ENCODE measurements at regions of chr7 and their contacts with region 1.

Region 1: GRCh38 chr7:66033471-66034385 is 41.9 kb upstream of the ASL start:
- DNase-seq: no peak
- H3K4me3 ChIP-seq: no peak overlapping the region
- H3K27ac ChIP-seq: no peak overlapping the region
- H3K27me3 ChIP-seq: no peaks in the 10 kb centered on the region
- CTCF ChIP-seq: no peak

Region 2: DNA sequence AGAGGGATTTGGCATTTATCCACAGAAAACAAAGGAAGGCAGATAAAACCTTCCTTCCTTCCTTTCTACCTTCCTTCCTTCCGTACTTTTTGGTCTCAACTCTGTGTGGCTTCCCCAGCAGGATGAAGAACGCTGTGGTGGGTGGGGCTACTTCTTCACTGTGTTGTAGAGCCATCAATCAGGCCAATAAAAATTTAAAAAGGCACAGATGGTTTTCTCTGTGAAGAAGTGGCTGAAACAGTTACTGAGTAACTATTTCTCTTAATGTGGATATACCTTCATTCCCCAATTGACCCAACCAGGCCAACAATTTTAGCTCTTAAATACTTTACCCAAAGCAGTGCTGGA is 584.2 kb before region 1 on chr7:
- CTCF ChIA-PET with region 1: no interaction called
- POLR2A ChIA-PET with region 1: no interaction called
- DNase-seq: no peak
- H3K4me3 ChIP-seq: no peak overlapping the region
- H3K27ac ChIP-seq: no peak overlapping the region
- H3K27me3 ChIP-seq: peaks cover 3% of the 10 kb centered on the region
- CTCF ChIP-seq: no peak

Region 3: DNA sequence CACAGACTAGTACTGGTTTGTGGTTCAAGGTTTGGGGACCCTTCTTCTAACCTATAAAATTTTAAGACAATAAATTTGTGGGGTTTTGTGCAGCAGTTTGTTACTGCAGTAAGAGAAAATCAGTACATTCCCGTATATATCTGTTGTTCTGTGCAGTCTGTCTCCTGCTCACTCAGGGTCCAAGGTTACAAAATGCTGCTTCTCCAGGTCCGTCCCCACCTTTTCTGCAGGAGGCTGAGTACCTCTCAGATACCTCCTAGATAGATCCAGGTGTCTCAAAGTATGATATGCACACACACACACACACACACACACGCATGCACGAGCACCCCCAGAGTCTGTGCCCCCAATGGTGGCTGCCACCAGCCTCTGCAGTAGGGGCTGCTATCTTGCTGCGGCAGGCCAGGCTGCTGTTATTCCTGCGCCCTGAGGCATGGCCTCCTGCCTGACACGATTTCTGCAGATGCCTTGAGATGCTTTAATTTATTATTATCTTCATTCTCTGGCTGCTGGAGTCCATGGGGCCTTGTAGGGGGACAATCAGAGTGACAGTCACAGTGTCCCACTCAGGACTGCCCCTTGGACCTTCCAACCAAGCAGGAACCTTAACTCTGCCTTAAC is 16.7 kb after region 1 on chr7:
- CTCF ChIA-PET with region 1: interaction called, 15 read pairs
- POLR2A ChIA-PET with region 1: interaction called, 6 read pairs
- DNase-seq: no peak
- H3K4me3 ChIP-seq: no peak overlapping the region
- H3K27ac ChIP-seq: peak overlapping the region; percentile 69
- H3K27me3 ChIP-seq: no peaks in the 10 kb centered on the region
- CTCF ChIP-seq: no peak

Region 4: GRCh38 chr7:66187905-66188304 is 154.2 kb after region 1 on chr7:
- CTCF ChIA-PET with region 1: interaction called, 12 read pairs
- POLR2A ChIA-PET with region 1: no interaction called
- DNase-seq: no peak
- H3K4me3 ChIP-seq: no peak overlapping the region
- H3K27ac ChIP-seq: no peak overlapping the region
- H3K27me3 ChIP-seq: no peaks in the 10 kb centered on the region
- CTCF ChIP-seq: no peak

Region 5: DNA sequence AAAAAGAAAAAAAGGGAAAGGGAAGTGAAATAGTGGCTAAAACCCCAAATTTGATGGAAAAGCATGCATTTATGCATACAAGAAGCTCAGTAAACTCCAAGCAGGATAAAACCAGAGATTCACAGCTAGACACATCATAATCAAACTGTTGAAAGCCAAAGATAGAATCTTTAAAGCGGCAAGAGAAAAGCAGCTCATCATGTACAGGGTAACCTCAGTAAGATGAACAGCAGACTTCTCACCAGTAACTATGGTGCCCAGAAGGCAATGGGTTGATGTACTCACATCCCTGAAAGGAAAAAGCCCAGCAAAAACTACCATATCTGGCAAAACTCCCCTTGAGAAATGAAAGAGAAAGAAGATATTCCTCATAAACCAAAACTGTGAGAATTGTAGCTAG is 231.8 kb after region 1 on chr7:
- CTCF ChIA-PET with region 1: interaction called, 13 read pairs
- POLR2A ChIA-PET with region 1: no interaction called
- DNase-seq: no peak
- H3K4me3 ChIP-seq: no peak overlapping the region
- H3K27ac ChIP-seq: no peak overlapping the region
- H3K27me3 ChIP-seq: no peaks in the 10 kb centered on the region
- CTCF ChIP-seq: no peak

Region 6: DNA sequence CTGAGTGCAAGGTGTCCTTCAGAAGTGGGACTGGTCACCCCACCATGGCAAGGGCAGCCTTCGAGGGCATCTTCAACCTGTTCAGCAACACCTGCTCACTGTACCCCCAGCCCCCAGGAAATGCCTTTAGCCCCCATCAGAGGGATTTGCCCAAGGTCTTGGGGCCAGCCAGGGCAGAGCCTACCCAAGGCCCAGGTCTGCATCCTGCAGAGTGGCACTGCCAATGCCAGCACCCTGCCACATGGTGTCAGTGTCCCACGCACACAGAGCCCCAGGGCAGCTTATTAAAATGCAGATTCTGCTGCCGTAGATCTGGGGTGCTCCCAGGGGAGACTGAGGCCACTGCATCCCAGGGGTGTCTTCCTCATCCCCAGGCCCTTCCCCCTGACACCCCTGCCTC is 488.8 kb after region 1 on chr7:
- CTCF ChIA-PET with region 1: interaction called, 12 read pairs
- POLR2A ChIA-PET with region 1: no interaction called
- DNase-seq: no peak
- H3K4me3 ChIP-seq: no peak overlapping the region
- H3K27ac ChIP-seq: no peak overlapping the region
- H3K27me3 ChIP-seq: no peaks in the 10 kb centered on the region
- CTCF ChIP-seq: peak; percentile 21; the same call in 1 of the 2 replicates

Measured in AG04450 (cell line).